ENCODE measurements at regions of chr12 and their contacts with region 1.

Region 1: DNA sequence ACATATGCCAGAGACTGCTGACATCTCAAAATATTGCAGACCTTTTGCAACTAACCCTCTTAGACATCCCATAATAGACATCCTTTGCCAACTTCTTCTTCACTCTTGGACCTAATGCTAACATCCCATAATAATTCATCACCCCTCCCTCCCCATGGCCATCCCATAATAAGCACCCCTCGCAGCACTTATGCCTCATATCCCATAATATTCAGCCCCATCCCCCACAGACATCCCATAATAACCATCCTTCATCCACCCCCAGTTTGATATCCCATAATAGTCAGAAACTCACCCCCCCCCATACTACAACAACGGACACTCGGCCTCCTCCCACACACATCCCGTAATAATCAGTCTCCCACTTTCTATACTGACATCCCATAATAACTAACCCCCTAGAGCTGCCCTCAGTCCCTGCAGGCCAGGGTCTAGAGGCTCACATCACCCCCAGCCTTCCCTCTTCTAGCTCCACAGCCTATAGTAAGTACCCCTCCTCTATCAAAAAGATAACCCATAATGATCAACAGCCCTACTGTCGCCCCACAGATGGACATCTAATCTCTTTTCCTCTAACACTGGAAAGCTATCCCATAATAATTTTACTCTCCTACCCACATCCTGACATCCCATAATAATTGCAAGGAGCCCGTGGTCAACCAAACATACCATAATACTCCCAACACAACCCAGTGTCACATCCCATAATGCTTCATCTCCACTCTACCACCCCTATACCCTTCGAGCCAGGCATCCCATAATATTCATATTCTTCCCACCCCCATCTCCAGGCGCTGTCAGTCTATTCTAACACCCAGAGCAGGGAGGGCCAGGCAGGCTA is 792 bp upstream of the CHD4 start:
- DNase-seq: no peak
- ATAC-seq: peak; percentile 2 to 4

Region 2: GRCh38 chr12:6567112-6567670 is 40.8 kb before region 1 on chr12:
- intact Hi-C with region 1: loop called in 1 of 2 experiments (anchors 5 kb)
- DNase-seq: no peak
- ATAC-seq: no peak

Region 3: DNA sequence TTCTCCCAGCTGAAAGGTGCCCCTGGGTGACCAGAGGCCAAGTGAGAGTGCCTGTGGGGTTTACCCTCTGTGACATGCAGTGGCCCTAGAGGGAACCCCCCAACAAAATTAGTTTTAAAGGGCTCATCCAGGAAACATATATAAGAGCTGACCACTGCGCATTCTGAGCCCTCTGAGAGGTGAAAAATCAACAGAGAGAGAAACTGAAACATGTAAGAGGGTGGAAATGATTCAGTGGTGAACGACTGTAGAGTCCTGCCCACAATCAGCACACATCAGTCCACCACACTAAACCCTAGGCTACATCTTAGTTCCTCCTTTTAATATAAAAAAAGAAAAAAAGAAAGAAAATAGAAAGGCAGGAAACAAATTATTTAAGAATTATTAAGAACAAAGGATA is 674.9 kb after region 1 on chr12:
- intact Hi-C with region 1: no loop called
- DNase-seq: no peak
- ATAC-seq: no peak